AG04449 (cell line): ENCODE measurements at regions of chr20 and their contacts with region 1.

Region 1: DNA sequence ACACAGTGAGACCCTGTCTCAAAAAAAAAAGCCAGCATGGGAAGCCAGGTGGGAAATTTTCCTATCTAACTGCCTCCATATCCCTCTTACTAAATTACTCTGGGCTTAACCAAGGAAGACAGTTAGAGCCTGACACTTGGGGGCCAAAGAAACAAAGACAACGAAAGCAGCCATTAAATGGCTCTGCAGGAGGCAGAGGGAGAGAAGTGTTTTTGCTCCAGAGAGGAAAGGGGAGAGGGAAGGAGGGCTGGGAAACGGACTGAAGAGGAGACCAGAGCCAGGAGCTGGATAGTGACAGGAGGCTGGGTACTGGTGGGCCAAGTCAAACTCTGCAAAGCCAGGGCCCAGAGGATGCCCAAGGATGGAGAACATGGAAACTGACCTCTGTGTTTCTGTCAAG is 10.7 kb upstream of the TGIF2 start:
- DNase-seq: no peak
- H3K4me3 ChIP-seq: no peak overlapping the region
- CTCF ChIP-seq: no peak

Region 2: DNA sequence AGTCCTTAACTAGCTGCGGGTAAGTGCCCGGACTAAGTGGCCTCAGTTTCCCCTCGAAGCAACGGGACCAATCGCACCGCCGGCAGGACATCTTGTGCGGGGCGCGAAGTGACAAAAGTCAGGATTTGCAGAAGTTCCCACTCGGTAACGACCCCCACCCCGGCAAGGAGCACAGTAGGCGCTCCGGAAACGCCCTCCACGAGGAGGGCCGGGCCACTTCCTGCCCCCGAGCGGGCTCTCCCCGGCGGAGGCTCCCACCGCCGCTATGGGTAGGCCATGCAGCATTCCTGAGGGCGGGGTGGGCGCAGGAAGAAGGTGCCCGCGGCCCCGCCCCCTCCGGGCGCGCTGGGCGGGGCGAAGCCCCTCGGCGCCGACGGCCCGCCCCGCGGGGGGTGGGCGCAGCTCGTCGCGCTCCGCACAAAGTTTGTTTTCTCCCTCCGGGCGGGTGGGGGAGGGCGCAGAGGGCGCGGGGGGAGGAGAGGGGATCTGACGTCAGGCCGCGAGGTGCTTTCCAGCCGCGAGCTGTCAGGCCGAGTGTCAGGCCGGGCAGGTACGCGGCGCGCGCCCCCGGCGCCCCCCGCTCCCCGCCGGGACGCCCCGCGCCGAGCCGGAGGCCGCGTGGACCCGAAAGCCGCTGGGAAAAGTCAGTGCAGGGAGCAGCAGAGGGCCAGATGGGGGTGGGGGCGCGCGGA is 10.5 kb after region 1 on chr20 and contains the start of gene TGIF2:
- CTCF ChIA-PET with region 1: interaction called, 40 read pairs
- POLR2A ChIA-PET with region 1: interaction called, 3 read pairs
- DNase-seq: no peak
- H3K4me3 ChIP-seq: peak within 1 kb of the TSS; percentile 70
- CTCF ChIP-seq: no peak

Region 3: GRCh38 chr20:36591854-36592641 is 29.3 kb after region 1 on chr20:
- CTCF ChIA-PET with region 1: interaction called, 17 read pairs
- POLR2A ChIA-PET with region 1: no interaction called
- DNase-seq: no peak
- H3K4me3 ChIP-seq: no peak overlapping the region
- CTCF ChIP-seq: peak; percentile 59

Region 4: DNA sequence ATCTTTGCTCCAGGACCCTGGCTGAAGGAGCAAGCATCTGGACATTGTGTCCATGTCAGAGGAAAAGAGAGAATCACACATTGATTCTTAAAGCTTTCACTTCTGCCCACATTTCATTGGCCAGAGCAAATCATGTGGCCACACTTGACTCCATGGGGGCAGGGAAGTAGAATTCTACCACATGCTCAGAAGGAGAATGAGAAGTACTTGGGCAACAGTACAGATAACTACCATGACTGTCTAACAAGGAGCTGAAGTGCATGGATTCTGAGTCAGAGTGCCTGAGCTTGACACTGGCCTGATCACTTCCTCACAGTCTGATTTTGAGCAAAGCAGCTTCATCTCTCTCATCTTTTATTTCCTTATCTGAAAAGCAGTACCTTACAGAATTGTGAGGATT is 660.3 kb after region 1 on chr20:
- CTCF ChIA-PET with region 1: no interaction called
- POLR2A ChIA-PET with region 1: no interaction called
- DNase-seq: peak; percentile 80
- H3K4me3 ChIP-seq: no peak overlapping the region
- CTCF ChIP-seq: no peak